Gastrocnemius medialis (tissue), 4 donors: ENCODE measurements at regions of chr4 and their contacts with region 1.

Region 1: GRCh38 chr4:76504613-76505465 is 69.8 kb downstream of the SHROOM3 start:
- DNase-seq: no peak
- ATAC-seq: peak; percentile 46 to 50
- H3K4me3 ChIP-seq: no peak overlapping the region
- H3K27ac ChIP-seq: no peak overlapping the region
- H3K4me1 ChIP-seq: no peaks in the 10 kb centered on the region
- H3K27me3 ChIP-seq: no peaks in the 10 kb centered on the region
- CTCF ChIP-seq: peak; percentile 47 to 66 (median 56)
- POLR2A ChIP-seq: no peak

Region 2: DNA sequence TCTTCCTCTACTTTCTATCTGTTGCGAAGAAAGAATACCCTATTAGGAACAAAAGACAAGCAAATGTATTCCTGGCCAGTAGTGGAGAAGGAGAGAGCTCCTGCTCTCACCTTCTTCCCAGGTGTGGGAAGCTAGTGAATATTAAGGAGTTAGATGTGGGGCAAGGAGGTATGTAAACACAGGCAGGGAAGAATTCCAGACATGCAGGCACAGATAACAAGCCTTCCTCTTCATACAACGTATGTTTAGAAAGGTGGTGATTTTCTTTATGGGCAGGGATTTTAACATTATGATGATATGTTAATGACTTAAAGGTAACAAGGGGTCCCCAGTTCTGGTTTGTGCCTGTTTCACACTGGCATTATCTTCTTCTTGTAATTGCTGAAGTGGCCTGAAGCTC is 1683.8 kb before region 1 on chr4:
- in situ Hi-C with region 1: no loop called
- intact Hi-C with region 1: no loop called
- DNase-seq: no peak
- ATAC-seq: no peak
- H3K4me3 ChIP-seq: no peak overlapping the region
- H3K27ac ChIP-seq: no peak overlapping the region
- H3K4me1 ChIP-seq: no peaks in the 10 kb centered on the region
- H3K27me3 ChIP-seq: no peaks in the 10 kb centered on the region
- CTCF ChIP-seq: no peak
- POLR2A ChIP-seq: no peak

Region 3: GRCh38 chr4:76179398-76180318 is 325.2 kb before region 1 on chr4:
- in situ Hi-C with region 1: loop called (anchors 5 to 10 kb)
- intact Hi-C with region 1: loop called (anchors 2 kb)
- DNase-seq: peak; percentile 68 to 84
- ATAC-seq: peak; percentile 86 to 92
- H3K4me3 ChIP-seq: no peak overlapping the region
- H3K27ac ChIP-seq: peak overlapping the region; percentile 34 to 70 (median 56)
- H3K4me1 ChIP-seq: peaks cover 15 to 30% of the 10 kb centered on the region in 2 donors
- H3K27me3 ChIP-seq: no peaks in the 10 kb centered on the region
- CTCF ChIP-seq: peak; percentile 89 to 96 (median 93)
- POLR2A ChIP-seq: no peak

Region 4: DNA sequence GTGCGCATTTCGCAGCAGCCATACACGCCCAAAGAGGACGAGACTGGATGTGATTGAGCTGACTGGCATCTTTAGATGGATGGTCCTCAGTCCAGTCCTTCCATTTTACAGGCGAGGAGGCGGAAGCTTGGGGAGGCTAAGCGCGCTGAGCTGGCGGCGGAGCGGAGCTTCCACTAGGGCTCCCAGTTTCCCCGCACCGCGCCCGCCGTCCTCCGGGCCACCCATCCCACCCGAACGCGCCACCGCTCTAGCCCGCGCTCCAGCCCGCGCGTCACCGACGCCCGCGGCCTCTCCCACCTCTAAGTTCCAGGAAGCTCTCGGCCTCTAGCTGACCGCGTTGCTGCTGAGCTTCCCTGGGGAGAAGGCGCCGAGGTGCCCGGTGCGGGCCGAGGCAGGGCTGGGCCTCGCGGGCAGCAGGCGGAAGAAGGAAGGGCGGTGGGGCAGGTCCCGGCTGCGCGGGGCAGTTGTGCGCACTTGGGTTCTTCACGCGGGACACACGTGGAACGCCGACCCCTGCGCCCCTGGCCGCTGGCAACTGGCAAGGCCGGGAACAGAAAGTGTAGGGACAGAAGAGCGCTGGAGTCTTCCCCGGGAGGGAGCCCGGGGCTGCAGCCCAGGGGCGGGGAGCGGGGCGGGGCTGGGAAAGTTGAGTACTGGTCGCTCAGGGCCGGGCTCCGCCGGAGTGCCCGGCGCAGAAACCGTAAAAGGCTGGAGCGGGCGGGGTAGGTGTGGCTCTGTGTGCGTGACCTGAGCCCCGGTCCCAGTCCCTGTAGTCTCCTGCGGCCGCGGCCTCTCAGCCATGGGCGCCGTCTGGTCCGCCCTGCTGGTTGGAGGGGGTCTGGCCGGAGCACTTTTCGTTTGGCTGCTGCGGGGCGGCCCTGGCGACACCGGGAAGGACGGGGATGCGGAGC is 198.6 kb before region 1 on chr4 and contains the start of gene STBD1:
- in situ Hi-C with region 1: no loop called
- intact Hi-C with region 1: loop called (anchors 10 kb)
- DNase-seq: peak; percentile 86 to 90
- ATAC-seq: peak; percentile 60 to 70
- H3K4me3 ChIP-seq: peak within 1 kb of the TSS; percentile 79 to 87 (median 86)
- H3K27ac ChIP-seq: peak within 1 kb of the TSS; percentile 93 to 98 (median 96)
- H3K4me1 ChIP-seq: peaks cover 68 to 69% of the 10 kb centered on the region in 2 donors
- H3K27me3 ChIP-seq: no peaks in the 10 kb centered on the region
- CTCF ChIP-seq: peak in 1 of 5 experiments; percentile 7
- POLR2A ChIP-seq: peak; percentile 81 to 88
- total RNA-seq, gene STBD1: 17.9 to 57.5 (median 41.5) TPM

Region 5: GRCh38 chr4:76430519-76431388 is 74.1 kb before region 1 on chr4:
- in situ Hi-C with region 1: loop called in 3 of 4 experiments (anchors 5 to 10 kb)
- intact Hi-C with region 1: loop called (anchors 2 kb)
- DNase-seq: no peak
- ATAC-seq: no peak
- H3K4me3 ChIP-seq: no peak overlapping the region
- H3K27ac ChIP-seq: no peak overlapping the region
- H3K4me1 ChIP-seq: no peaks in the 10 kb centered on the region
- H3K27me3 ChIP-seq: no peaks in the 10 kb centered on the region
- CTCF ChIP-seq: peak; percentile 13 to 62 (median 33)
- POLR2A ChIP-seq: no peak

Region 6: DNA sequence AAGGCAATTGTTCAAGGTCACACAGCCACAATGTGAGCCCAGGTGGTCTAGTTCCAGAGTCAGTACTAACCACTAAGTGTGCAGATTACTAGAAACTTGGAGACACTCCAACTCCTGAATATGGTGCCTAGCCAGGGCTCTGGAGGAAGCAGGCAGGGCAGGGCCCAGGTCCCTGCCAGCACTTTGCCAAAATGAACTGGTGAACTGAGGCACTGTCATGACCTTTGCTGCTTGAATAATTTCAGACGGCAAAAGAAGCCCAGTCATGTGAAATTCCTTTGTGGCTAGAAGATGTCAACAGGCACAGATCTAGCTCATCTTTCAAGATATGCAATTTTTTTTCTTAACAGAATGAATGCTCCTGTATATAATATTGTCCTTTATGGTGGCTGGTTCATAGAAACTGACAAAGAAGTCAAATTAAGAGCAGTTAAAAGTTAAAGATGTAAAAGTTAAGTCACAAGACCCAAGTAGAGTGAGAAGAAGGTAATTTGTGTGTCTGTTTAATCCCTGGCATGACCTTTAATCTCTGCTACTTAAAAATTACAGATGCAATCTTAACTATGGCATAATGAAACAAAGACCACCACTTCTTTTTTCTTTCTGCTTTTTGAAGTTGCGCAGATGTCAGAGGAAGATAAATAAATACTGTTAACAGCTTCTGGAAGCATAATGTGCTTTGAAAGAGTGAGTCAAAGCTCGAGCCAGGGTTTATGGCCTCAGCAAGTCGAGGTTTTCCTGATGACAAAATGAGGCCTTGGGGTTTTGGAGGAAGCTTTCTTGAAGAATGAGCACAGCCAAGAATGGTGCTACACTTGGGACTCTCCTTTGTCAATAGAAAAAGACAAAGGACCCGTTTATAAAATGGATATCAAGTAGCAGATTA is 15.7 kb before region 1 on chr4:
- in situ Hi-C with region 1: no loop called
- intact Hi-C with region 1: no loop called
- DNase-seq: no peak
- ATAC-seq: no peak
- H3K4me3 ChIP-seq: no peak overlapping the region
- H3K27ac ChIP-seq: no peak overlapping the region
- H3K4me1 ChIP-seq: no peaks in the 10 kb centered on the region
- H3K27me3 ChIP-seq: no peaks in the 10 kb centered on the region
- CTCF ChIP-seq: no peak
- POLR2A ChIP-seq: no peak

Region 7: GRCh38 chr4:76689241-76689817 is 184.5 kb after region 1 on chr4:
- in situ Hi-C with region 1: no loop called
- intact Hi-C with region 1: no loop called
- DNase-seq: no peak
- ATAC-seq: peak; percentile 30 to 36
- H3K4me3 ChIP-seq: peak overlapping the region; percentile 44 to 61 (median 46)
- H3K27ac ChIP-seq: no peak overlapping the region
- H3K4me1 ChIP-seq: peaks cover 6 to 9% of the 10 kb centered on the region in 2 donors
- H3K27me3 ChIP-seq: peaks cover 15 to 38% (median 26%) of the 10 kb centered on the region in 3 donors
- CTCF ChIP-seq: no peak
- POLR2A ChIP-seq: no peak

Region 8: GRCh38 chr4:77044461-77045150 is 539.8 kb after region 1 on chr4:
- in situ Hi-C with region 1: loop called in 3 of 4 experiments (anchors 25 kb)
- intact Hi-C with region 1: loop called (anchors 5 kb)
- DNase-seq: no peak
- ATAC-seq: no peak
- H3K4me3 ChIP-seq: no peak overlapping the region
- H3K27ac ChIP-seq: peak overlapping the region in 1 of 4 donors; percentile 34
- H3K4me1 ChIP-seq: peaks cover 10 to 11% of the 10 kb centered on the region in 2 donors
- H3K27me3 ChIP-seq: no peaks in the 10 kb centered on the region
- CTCF ChIP-seq: peak; percentile 24 to 53 (median 43)
- POLR2A ChIP-seq: no peak